HepG2 (cell line): ENCODE measurements at regions of chr1 and their contacts with region 1.

Region 1: DNA sequence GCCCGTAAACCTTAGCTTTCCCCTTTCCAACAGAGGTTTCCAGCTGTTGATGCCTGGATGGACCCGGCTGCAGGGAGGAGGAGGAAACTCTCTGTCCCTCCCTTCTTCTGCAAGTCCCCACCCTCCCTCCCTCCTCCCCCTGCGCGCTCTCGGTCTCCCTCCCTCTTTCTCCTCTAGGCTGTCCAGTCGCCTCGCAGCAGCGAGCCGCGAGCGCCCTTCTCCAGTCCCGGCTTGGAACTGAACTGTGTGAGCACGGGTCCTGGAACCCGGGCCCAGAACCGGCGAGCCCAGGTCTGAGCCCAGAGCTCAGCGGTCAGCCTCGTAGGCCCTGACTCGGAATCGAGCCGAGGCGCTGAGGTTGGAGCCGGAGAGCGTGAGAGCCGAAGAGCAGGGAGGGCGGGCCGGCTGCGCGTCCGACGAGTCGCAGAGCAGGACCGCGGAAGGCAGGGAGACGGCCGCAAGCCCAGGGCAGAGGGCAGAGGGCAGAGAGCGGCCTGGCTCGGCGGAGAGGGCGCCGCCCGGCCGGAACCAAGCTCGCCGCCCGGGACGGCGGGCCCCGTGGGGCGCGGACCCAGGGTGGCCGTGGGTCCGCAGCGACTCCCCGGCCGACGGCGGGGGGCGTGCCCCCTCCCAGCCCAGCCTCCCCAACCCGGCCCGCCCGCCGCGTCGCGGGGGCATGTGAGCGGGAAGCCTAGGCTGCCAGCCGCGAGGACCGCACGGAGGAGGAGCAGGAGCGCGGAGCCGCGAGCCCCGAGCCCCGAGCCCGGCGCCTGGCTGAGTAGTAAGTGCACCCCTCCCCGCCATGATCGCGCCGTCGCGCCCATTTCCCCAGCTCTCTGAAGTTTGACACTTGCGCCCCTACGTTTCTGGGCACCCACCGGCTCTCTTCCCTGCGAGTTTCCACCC is at the start of gene SOX13:
- DNase-seq: peak; percentile 78
- ATAC-seq: peak; percentile 72
- H3K4me3 ChIP-seq: peak within 1 kb of the TSS; percentile 85 to 96 (median 95)
- H3K27ac ChIP-seq: peak within 1 kb of the TSS; percentile 94
- H3K4me1 ChIP-seq: peaks cover 30% of the 10 kb centered on the region
- H3K27me3 ChIP-seq: peaks cover 0 to 5% of the 10 kb centered on the region in 2 experiments; a peak in 1 of 5 replicates
- CTCF ChIP-seq: peak; percentile 62
- EP300 ChIP-seq: no peak
- POLR2A ChIP-seq: peak in 1 of 2 experiments; percentile 85; a peak in 2 of 4 replicates
- RAD21 ChIP-seq: peak; percentile 70
- total RNA-seq, gene SOX13: 9.3 and 13.3 TPM in 2 replicates

Region 2: GRCh38 chr1:203861379-203862184 is 211.6 kb before region 1 on chr1 and contains the start of gene SNRPE:
- CTCF ChIA-PET with region 1: no interaction called
- POLR2A ChIA-PET with region 1: interaction called, 3 read pairs
- in situ Hi-C with region 1: no loop called
- intact Hi-C with region 1: loop called (anchors 5 kb)
- DNase-seq: peak; percentile 96
- ATAC-seq: peak; percentile 96
- H3K4me3 ChIP-seq: peak within 1 kb of the TSS; percentile 87 to 90 (median 90)
- H3K27ac ChIP-seq: peak within 1 kb of the TSS; percentile 85
- H3K4me1 ChIP-seq: peaks cover 27% of the 10 kb centered on the region
- H3K27me3 ChIP-seq: no peaks in the 10 kb centered on the region; a peak in 1 of 5 replicates
- CTCF ChIP-seq: peak; percentile 97
- EP300 ChIP-seq: peak in 1 of 2 experiments; percentile 48; a peak in 1 of 4 replicates
- POLR2A ChIP-seq: peak; percentile 71 to 92
- RAD21 ChIP-seq: peak; percentile 96
- total RNA-seq, gene SNRPE: 281 and 397 TPM in 2 replicates

Region 3: GRCh38 chr1:204094856-204095644 is 21.9 kb after region 1 on chr1:
- CTCF ChIA-PET with region 1: no interaction called
- POLR2A ChIA-PET with region 1: interaction called, 10 read pairs
- in situ Hi-C with region 1: no loop called
- intact Hi-C with region 1: loop called (anchors 2 kb)
- DNase-seq: no peak
- ATAC-seq: no peak
- H3K4me3 ChIP-seq: no peak overlapping the region
- H3K27ac ChIP-seq: no peak overlapping the region
- H3K4me1 ChIP-seq: peaks cover 88% of the 10 kb centered on the region
- H3K27me3 ChIP-seq: no peaks in the 10 kb centered on the region
- CTCF ChIP-seq: no peak
- EP300 ChIP-seq: no peak
- POLR2A ChIP-seq: no peak
- RAD21 ChIP-seq: no peak

Region 4: GRCh38 chr1:204104133-204104871 is 31.1 kb after region 1 on chr1:
- CTCF ChIA-PET with region 1: no interaction called
- POLR2A ChIA-PET with region 1: interaction called, 20 read pairs
- in situ Hi-C with region 1: no loop called
- intact Hi-C with region 1: loop called (anchors 1 kb)
- DNase-seq: no peak
- ATAC-seq: no peak
- H3K4me3 ChIP-seq: no peak overlapping the region
- H3K27ac ChIP-seq: peak overlapping the region; percentile 9
- H3K4me1 ChIP-seq: peaks cover 68% of the 10 kb centered on the region
- H3K27me3 ChIP-seq: no peaks in the 10 kb centered on the region
- CTCF ChIP-seq: no peak
- EP300 ChIP-seq: no peak
- POLR2A ChIP-seq: no peak
- RAD21 ChIP-seq: no peak

Region 5: DNA sequence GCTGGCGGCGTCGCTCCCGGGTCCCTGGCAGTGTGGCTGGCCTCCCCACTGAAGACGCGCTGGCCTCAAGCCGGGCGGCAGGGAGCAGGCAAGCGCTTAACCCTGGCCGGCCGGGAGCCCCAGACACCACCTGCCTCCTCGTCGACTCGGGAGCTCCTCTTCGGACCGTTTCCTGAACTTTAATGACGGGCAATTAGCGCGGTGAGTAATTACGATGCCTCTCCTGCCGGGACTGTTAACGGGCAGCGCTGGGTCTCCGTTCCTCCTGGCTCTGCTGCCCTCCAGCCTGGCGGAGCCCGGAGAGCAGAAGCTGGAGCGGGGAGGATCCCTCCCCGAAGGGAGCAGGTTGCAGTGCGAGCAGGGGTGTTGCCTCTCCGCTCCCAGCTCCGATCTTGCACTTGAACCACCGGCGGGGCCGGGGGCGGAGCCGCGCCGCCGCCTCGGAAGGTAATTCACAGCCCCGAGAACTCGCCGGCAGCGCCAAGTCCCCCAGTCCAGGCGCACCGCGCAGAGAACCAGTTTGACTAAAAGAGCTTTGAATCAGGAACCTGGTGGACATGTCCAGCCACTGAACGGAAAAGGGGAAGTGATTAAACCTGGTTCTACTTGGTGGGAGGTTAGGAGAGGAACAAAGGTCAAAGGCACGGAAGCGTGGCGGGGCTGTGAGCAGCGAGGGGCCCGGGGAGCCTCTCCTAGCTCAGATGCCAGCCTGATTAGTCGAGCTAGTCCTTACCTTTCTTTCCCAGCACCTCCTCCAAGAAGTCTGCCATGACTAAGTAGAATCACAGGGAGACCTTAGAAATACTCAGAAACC is 304.8 kb after region 1 on chr1:
- CTCF ChIA-PET with region 1: no interaction called
- POLR2A ChIA-PET with region 1: no interaction called
- in situ Hi-C with region 1: loop called (anchors 10 kb)
- intact Hi-C with region 1: no loop called
- DNase-seq: peak; percentile 69
- ATAC-seq: peak; percentile 82
- H3K4me3 ChIP-seq: peak overlapping the region; percentile 81 to 85 (median 83)
- H3K27ac ChIP-seq: peak overlapping the region; percentile 65
- H3K4me1 ChIP-seq: peaks cover 66% of the 10 kb centered on the region
- H3K27me3 ChIP-seq: no peaks in the 10 kb centered on the region; a peak in 1 of 5 replicates
- CTCF ChIP-seq: no peak
- EP300 ChIP-seq: no peak; a peak in 1 of 4 replicates
- POLR2A ChIP-seq: peak; percentile 39 to 70; a peak in 3 of 4 replicates
- RAD21 ChIP-seq: no peak